Ovary (tissue), 10 donors: ENCODE measurements at regions of chr3 and their contacts with region 1.

Region 1: GRCh38 chr3:11236595-11237461 is 35.4 kb upstream of the ATG7 start:
- DNase-seq: peak; percentile 43 to 66 (median 53)
- H3K4me3 ChIP-seq: no peak overlapping the region
- H3K27ac ChIP-seq: no peak overlapping the region
- H3K4me1 ChIP-seq: no peaks in the 10 kb centered on the region
- H3K27me3 ChIP-seq: no peaks in the 10 kb centered on the region
- CTCF ChIP-seq: peak in 1 of 3 donors; percentile 44
- EP300 ChIP-seq: no peak
- POLR2A ChIP-seq: no peak

Region 2: DNA sequence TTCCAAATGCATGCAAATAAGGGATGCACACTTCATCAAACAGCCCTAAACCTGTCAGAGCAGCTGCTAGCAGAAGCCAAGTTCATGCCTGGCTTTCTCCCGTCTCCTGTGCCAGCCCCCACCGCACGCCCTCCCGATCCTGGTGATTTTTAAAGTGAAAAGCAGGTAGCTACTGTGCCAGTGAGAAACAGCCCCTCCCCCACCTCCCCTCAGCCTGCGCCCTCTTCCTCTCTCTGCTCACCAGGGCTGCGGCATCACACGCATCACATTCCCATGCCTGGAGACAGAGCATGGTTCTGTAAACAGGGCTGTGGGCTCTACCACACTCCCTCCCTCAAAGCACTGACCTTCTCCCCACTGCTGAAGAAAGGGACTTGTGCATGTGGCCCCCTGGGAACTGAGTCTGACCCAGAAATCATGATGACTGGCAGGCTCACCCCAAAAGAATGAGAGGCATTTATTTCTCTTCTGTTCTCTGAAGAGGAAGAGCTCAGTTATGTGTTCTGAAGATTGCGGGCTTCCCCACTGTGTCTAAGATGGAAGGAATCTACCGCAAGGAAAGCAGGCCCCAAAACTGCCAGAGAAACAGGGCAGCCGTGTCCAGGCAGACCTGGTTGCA is 258.8 kb before region 1 on chr3:
- intact Hi-C with region 1: loop called in 1 of 4 experiments (anchors 5 kb)
- DNase-seq: no peak
- H3K4me3 ChIP-seq: no peak overlapping the region
- H3K27ac ChIP-seq: no peak overlapping the region
- H3K4me1 ChIP-seq: peaks cover 2% of the 10 kb centered on the region
- H3K27me3 ChIP-seq: no peaks in the 10 kb centered on the region
- CTCF ChIP-seq: no peak
- EP300 ChIP-seq: no peak
- POLR2A ChIP-seq: no peak

Region 3: DNA sequence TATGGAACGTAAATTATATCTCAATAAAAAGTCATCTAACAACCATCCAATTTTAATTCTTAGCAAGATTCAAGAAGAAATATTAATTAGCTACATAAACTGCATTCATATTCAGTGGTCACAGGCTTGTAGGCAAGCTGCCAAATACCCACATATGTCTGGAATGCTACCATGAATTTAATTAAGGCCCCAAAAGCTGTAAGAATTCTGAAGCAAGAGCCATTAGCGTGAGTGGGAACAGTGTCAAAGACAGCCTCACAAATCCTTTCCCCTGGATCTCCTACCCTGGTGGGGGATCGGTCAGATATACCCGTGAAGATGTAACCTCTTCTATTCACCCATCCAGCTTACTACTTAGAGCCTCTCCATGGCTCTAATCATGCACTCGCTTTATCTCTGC is 75.3 kb after region 1 on chr3:
- intact Hi-C with region 1: no loop called
- DNase-seq: no peak
- H3K4me3 ChIP-seq: no peak overlapping the region
- H3K27ac ChIP-seq: no peak overlapping the region
- H3K4me1 ChIP-seq: peaks cover 4% of the 10 kb centered on the region
- H3K27me3 ChIP-seq: no peaks in the 10 kb centered on the region
- CTCF ChIP-seq: no peak
- EP300 ChIP-seq: no peak
- POLR2A ChIP-seq: no peak

Region 4: GRCh38 chr3:12719984-12720898 is 1483.4 kb after region 1 on chr3:
- intact Hi-C with region 1: no loop called
- DNase-seq: peak; percentile 69 to 85 (median 74)
- H3K4me3 ChIP-seq: peak overlapping the region; percentile 31
- H3K27ac ChIP-seq: no peak overlapping the region
- H3K4me1 ChIP-seq: no peaks in the 10 kb centered on the region
- H3K27me3 ChIP-seq: no peaks in the 10 kb centered on the region
- CTCF ChIP-seq: peak; percentile 87 to 89 (median 87)
- EP300 ChIP-seq: no peak
- POLR2A ChIP-seq: no peak